ENCODE measurements at regions of chr9 and their contacts with region 1.

Region 1: DNA sequence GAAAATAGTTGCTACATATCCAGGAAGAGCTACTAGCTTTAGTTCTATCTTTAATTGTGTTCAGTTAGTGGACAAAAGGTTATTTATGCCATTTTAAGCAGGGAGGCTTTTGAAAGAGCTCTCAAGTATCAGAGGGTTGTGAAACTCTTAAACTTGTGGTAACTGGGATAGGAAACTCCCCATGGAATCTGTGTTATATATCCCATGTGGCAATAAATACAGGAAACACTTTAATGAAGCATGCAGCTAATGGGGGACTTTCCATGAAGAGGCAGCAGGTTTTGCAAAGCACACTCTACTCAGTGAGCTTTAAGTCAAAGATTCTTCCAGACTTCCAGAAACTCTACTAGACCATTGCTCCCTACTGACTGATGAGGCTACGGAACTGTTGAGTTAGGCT is 805.0 kb upstream of the C9orf72 start:
- DNase-seq: no peak
- H3K4me3 ChIP-seq: no peak overlapping the region
- H3K27ac ChIP-seq: no peak overlapping the region
- H3K4me1 ChIP-seq: no peaks in the 10 kb centered on the region
- H3K27me3 ChIP-seq: no peaks in the 10 kb centered on the region
- CTCF ChIP-seq: no peak

Region 2: GRCh38 chr9:28301281-28301680 is 77.0 kb before region 1 on chr9:
- intact Hi-C with region 1: no loop called
- DNase-seq: no peak
- H3K4me3 ChIP-seq: no peak overlapping the region
- H3K27ac ChIP-seq: no peak overlapping the region
- H3K4me1 ChIP-seq: no peaks in the 10 kb centered on the region
- H3K27me3 ChIP-seq: no peaks in the 10 kb centered on the region
- CTCF ChIP-seq: no peak

Region 3: GRCh38 chr9:28317745-28318144 is 60.5 kb before region 1 on chr9:
- intact Hi-C with region 1: loop called (anchors 2 kb)
- DNase-seq: no peak
- H3K4me3 ChIP-seq: no peak overlapping the region
- H3K27ac ChIP-seq: no peak overlapping the region
- H3K4me1 ChIP-seq: no peaks in the 10 kb centered on the region
- H3K27me3 ChIP-seq: no peaks in the 10 kb centered on the region
- CTCF ChIP-seq: no peak